Uterus (tissue), 4 donors: ENCODE measurements at regions of chr12 and their contacts with region 1.

Region 1: GRCh38 chr12:9813821-9814809 is 13.2 kb upstream of the KLRF1 start:
- DNase-seq: peak; percentile 45 to 60
- H3K4me3 ChIP-seq: no peak overlapping the region
- H3K27ac ChIP-seq: no peak overlapping the region
- H3K4me1 ChIP-seq: no peaks in the 10 kb centered on the region
- H3K27me3 ChIP-seq: no peaks in the 10 kb centered on the region
- CTCF ChIP-seq: peak; percentile 28 to 62 (median 52)
- POLR2A ChIP-seq: no peak

Region 2: DNA sequence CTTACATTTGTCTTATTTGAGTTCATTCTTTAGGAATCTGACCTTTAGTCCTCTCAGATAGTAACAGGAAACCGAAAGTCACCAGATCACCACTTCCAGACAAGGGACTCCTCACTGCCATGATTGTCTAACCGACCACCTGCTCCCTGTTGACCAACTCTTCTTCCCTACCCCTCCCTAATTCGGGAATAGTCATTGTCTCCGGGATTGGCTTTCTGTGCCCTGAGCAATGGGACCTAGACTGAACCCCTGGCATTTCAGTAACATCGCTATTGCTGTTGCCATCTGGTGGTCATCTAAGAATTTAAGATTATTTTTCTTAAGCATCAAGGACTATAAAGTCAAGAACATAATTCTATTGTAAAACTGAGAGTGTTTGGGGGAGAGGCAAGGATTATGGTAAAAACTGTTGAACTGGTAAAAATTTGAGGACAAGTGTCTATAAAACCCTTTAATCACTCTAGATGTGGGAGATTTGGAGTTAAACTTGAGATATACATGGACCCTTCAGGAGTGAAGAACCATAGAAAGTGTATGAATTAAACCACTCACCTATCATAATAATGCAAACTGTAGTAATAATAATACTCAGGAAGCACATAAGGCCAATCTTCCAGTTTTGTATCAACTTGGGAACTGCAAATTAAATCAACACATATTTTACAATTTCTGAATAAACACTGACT is 111.7 kb after region 1 on chr12:
- intact Hi-C with region 1: loop called (anchors 10 kb)
- DNase-seq: no peak
- H3K4me3 ChIP-seq: no peak overlapping the region
- H3K27ac ChIP-seq: no peak overlapping the region
- H3K4me1 ChIP-seq: no peaks in the 10 kb centered on the region
- H3K27me3 ChIP-seq: no peaks in the 10 kb centered on the region
- CTCF ChIP-seq: peak; percentile 51 to 56 (median 52)
- POLR2A ChIP-seq: no peak